ENCODE measurements at regions of chr4 and their contacts with region 1.

Region 1: GRCh38 chr4:177573505-177573904 is 131.3 kb upstream of the AGA start:
- DNase-seq: peak; percentile 88
- H3K4me3 ChIP-seq: no peak overlapping the region
- H3K27ac ChIP-seq: no peak overlapping the region
- H3K4me1 ChIP-seq: peaks cover 4% of the 10 kb centered on the region
- H3K27me3 ChIP-seq: no peaks in the 10 kb centered on the region
- CTCF ChIP-seq: no peak

Region 2: DNA sequence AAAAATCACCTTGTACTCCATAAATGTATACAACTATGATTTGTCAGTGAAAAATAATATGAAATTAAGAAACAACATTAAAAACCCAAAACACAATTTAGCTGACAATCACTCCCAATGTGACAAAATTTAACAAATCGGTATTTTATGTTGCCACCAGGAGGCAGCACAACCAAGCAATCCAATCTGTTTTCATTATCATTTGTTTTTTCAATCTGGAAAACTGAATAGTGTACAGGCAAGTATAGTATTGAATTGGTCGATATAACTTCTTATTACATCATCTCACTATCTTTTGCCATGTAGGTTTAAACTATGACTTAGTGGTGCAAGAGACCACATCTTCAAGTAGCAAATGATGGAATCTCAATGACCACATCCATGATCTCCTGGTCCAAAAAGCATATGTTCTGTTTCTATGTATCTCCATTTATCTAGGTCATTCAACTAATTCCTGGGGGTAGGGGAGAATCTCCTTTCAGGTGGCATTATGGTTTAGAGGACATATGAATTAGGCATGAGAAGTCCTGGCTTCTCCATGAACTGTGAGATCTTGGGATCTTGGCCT is 18.4 kb before region 1 on chr4:
- CTCF ChIA-PET with region 1: interaction called, 18 read pairs
- dilution Hi-C with region 1: no loop called
- in situ Hi-C with region 1: no loop called
- intact Hi-C with region 1: no loop called
- DNase-seq: peak; percentile 16
- H3K4me3 ChIP-seq: no peak overlapping the region
- H3K27ac ChIP-seq: no peak overlapping the region
- H3K4me1 ChIP-seq: no peaks in the 10 kb centered on the region
- H3K27me3 ChIP-seq: no peaks in the 10 kb centered on the region
- CTCF ChIP-seq: peak; percentile 63 to 69